ENCODE measurements at regions of chr18 and their contacts with region 1.

Region 1: DNA sequence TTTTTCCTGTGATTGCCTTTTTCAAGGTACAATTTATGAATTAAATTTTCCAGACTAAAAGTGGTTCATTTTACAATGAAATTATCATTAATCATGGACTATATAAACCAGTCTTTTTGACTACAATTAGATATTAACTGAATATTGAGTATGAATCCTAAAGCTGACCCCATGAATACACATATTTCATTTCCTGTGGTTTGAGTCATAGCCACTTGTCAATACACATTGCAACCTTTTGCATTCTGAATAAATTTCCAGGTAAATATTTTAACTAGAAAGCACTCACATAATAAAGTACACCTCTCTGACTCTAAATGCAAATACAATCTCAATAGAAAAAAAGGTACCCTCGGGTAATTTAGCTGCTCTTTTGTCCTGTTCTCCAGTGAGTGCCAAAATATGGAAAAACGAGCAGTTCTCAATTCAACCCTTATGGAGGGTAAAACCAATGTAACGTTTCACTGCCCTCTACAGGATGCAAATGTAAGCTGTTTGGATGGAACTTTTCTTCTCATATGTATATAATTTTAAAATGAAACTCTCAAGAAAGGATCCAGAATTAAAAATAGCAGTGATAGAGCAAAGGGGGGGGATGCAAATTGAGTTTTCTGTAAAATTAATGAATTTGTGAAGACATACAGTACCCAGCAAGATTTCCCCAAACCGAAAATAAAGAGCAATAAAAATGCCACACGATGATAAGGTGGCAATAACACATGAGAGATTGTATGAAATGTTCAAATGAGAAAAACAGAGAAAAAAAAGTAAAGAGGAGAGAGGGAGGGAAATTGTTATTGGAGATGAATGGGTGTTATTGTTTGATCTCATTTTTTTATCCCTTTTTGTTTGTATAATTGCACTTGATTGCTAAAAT is 1795.7 kb upstream of the PIK3C3 start:
- DNase-seq: peak; percentile 1
- ATAC-seq: peak; percentile 85
- H3K4me3 ChIP-seq: no peak overlapping the region
- H3K27ac ChIP-seq: no peak overlapping the region
- H3K4me1 ChIP-seq: no peaks in the 10 kb centered on the region
- H3K27me3 ChIP-seq: no peaks in the 10 kb centered on the region
- CTCF ChIP-seq: peak; percentile 33 to 62 (median 44); a peak in 4 of 6 replicates
- EP300 ChIP-seq: no peak
- POLR2A ChIP-seq: no peak
- RAD21 ChIP-seq: peak; percentile 63

Region 2: GRCh38 chr18:39591649-39592048 is 567.7 kb before region 1 on chr18:
- CTCF ChIA-PET with region 1: no interaction called
- POLR2A ChIA-PET with region 1: no interaction called
- RAD21 ChIA-PET with region 1: no interaction called
- SMC1A ChIA-PET with region 1: no interaction called
- in situ Hi-C with region 1: no loop called
- intact Hi-C with region 1: loop called (anchors 10 kb)
- DNase-seq: no peak
- ATAC-seq: no peak
- H3K4me3 ChIP-seq: no peak overlapping the region
- H3K27ac ChIP-seq: no peak overlapping the region
- H3K4me1 ChIP-seq: no peaks in the 10 kb centered on the region
- H3K27me3 ChIP-seq: no peaks in the 10 kb centered on the region
- CTCF ChIP-seq: no peak
- EP300 ChIP-seq: no peak
- POLR2A ChIP-seq: no peak
- RAD21 ChIP-seq: no peak

Region 3: GRCh38 chr18:39871961-39872360 is 287.4 kb before region 1 on chr18:
- CTCF ChIA-PET with region 1: interaction called, 3 read pairs
- POLR2A ChIA-PET with region 1: no interaction called
- RAD21 ChIA-PET with region 1: no interaction called
- SMC1A ChIA-PET with region 1: no interaction called
- in situ Hi-C with region 1: no loop called
- intact Hi-C with region 1: loop called (anchors 2 kb)
- DNase-seq: no peak
- ATAC-seq: peak; percentile 65
- H3K4me3 ChIP-seq: no peak overlapping the region
- H3K27ac ChIP-seq: no peak overlapping the region
- H3K4me1 ChIP-seq: no peaks in the 10 kb centered on the region
- H3K27me3 ChIP-seq: no peaks in the 10 kb centered on the region
- CTCF ChIP-seq: no peak
- EP300 ChIP-seq: no peak
- POLR2A ChIP-seq: no peak
- RAD21 ChIP-seq: no peak

Region 4: DNA sequence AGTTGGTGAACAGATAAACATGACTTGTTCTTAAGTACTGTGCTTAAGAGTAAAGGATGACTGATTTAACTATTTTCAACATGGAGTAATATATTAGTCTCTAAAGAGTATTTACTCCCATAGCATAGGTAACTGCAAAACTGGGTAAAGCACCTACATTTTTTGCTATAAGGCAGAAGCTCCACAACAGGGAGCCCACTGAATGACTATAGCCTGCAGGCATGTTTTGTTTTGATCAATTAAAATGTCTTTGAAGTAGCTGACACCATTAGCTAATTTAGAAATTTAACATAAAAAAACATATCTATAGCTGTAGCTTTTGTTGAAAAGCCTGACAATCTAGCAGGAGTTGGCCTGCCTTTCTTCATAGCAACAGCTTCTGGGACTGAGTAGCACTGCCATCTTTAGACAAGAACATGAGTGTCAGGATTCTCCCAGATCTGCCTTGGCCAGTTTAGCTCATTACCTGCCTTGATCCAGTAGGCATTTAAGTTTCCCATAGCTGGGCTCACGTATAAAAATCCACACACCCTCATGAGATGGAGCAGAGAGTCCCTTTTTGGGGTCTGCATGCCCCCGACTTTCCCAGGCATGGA is 139.5 kb before region 1 on chr18:
- CTCF ChIA-PET with region 1: interaction called, 3 read pairs
- POLR2A ChIA-PET with region 1: no interaction called
- RAD21 ChIA-PET with region 1: no interaction called
- SMC1A ChIA-PET with region 1: interaction called, 6 read pairs
- in situ Hi-C with region 1: no loop called
- intact Hi-C with region 1: loop called (anchors 10 kb)
- DNase-seq: no peak
- ATAC-seq: no peak
- H3K4me3 ChIP-seq: no peak overlapping the region
- H3K27ac ChIP-seq: no peak overlapping the region
- H3K4me1 ChIP-seq: no peaks in the 10 kb centered on the region
- H3K27me3 ChIP-seq: no peaks in the 10 kb centered on the region
- CTCF ChIP-seq: no peak
- EP300 ChIP-seq: no peak
- POLR2A ChIP-seq: no peak
- RAD21 ChIP-seq: no peak

Region 5: DNA sequence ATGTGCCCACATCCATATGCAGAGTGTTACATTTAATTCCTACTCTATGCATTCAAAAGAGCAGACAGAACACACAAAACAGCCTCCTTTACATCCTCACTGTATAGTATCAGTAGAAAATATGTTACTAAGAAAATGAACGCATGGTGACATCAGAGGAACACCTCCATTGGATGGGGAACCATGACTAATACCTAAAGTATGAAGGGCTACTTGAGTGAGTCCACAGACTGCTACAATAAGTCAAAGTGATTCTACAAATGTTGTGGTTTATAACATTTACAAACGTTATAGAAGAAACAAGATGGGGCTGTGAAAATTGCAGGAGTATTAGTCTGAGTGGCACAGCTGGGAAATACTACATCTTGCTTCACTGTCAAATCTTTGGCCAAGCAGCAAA is 35.3 kb before region 1 on chr18:
- CTCF ChIA-PET with region 1: no interaction called
- POLR2A ChIA-PET with region 1: no interaction called
- RAD21 ChIA-PET with region 1: no interaction called
- SMC1A ChIA-PET with region 1: interaction called, 3 read pairs
- in situ Hi-C with region 1: no loop called
- intact Hi-C with region 1: loop called (anchors 2 kb)
- DNase-seq: no peak
- ATAC-seq: peak; percentile 89
- H3K4me3 ChIP-seq: no peak overlapping the region
- H3K27ac ChIP-seq: no peak overlapping the region
- H3K4me1 ChIP-seq: no peaks in the 10 kb centered on the region
- H3K27me3 ChIP-seq: no peaks in the 10 kb centered on the region
- CTCF ChIP-seq: no peak
- EP300 ChIP-seq: peak in 1 of 2 experiments; percentile 29; a peak in 2 of 4 replicates
- POLR2A ChIP-seq: no peak
- RAD21 ChIP-seq: no peak

Region 6: DNA sequence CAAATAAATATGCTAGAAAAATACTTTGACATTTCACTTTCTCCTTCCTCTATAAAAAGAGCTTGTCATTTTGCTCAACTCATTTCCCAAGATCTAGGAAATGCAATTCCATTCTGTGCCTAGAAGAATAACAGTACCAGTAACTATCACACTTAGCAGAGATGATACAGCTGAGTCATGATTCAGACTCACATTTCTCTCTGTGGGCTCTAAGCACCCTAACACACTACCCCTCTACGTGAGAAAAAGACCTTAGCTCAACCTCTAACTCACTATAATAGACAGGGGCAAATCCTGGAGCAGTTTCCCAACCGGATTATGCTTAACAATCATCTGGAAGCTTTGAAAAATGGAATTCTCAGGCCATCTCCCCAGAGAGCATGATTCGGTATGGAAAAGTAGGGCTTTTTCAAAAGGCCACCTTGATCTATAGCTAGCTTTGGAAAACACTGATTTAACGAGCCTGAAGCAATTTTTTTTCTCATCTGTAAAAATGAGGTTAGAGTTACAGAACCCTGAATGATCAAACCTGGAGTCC is 483.4 kb after region 1 on chr18:
- CTCF ChIA-PET with region 1: no interaction called
- POLR2A ChIA-PET with region 1: no interaction called
- RAD21 ChIA-PET with region 1: no interaction called
- SMC1A ChIA-PET with region 1: no interaction called
- in situ Hi-C with region 1: no loop called
- intact Hi-C with region 1: no loop called
- DNase-seq: no peak
- ATAC-seq: no peak
- H3K4me3 ChIP-seq: no peak overlapping the region
- H3K27ac ChIP-seq: no peak overlapping the region
- H3K4me1 ChIP-seq: no peaks in the 10 kb centered on the region
- H3K27me3 ChIP-seq: no peaks in the 10 kb centered on the region
- CTCF ChIP-seq: no peak
- EP300 ChIP-seq: no peak
- POLR2A ChIP-seq: no peak
- RAD21 ChIP-seq: no peak

Measured in GM12878 (cell line).